Heart right ventricle (tissue), 16 donors: ENCODE measurements at regions of chr11 and their contacts with region 1.

Region 1: GRCh38 chr11:128824191-128825049 is 42.7 kb downstream of the KCNJ1 start:
- DNase-seq: no peak
- ATAC-seq: peak; percentile 38 to 86 (median 56)
- H3K4me3 ChIP-seq: peak overlapping the region in 8 of 10 donors; percentile 12 to 36 (median 26)
- H3K27ac ChIP-seq: peak overlapping the region in 6 of 10 donors; percentile 37 to 72 (median 54)
- H3K4me1 ChIP-seq: peaks cover 0 to 22% (median 6%) of the 10 kb centered on the region in 9 donors
- H3K27me3 ChIP-seq: peaks cover 0 to 11% (median 0%) of the 10 kb centered on the region in 7 donors
- CTCF ChIP-seq: no peak

Region 2: DNA sequence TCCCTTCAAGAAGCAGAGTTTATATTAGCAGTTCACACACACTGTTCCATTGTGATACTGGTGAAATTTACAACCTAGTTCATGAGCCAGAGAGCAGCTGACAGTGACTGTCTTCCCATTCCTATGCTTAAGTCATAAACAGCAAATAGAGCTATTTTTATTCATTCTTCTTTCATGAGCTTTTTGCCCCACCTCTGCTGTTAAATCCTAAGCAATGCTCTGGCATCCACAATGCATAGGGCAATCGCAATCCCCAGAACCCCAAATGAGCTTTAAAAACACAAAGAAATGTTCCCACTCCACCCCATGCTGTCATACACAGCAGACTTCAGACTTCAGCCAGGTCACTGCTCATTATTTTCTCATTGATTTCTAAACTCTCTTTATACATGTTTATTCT is 544.6 kb before region 1 on chr11:
- intact Hi-C with region 1: loop called in 1 of 10 experiments (anchors 10 kb)
- DNase-seq: no peak
- ATAC-seq: no peak
- H3K4me3 ChIP-seq: no peak overlapping the region
- H3K27ac ChIP-seq: no peak overlapping the region
- H3K4me1 ChIP-seq: no peaks in the 10 kb centered on the region
- H3K27me3 ChIP-seq: no peaks in the 10 kb centered on the region
- CTCF ChIP-seq: no peak

Region 3: DNA sequence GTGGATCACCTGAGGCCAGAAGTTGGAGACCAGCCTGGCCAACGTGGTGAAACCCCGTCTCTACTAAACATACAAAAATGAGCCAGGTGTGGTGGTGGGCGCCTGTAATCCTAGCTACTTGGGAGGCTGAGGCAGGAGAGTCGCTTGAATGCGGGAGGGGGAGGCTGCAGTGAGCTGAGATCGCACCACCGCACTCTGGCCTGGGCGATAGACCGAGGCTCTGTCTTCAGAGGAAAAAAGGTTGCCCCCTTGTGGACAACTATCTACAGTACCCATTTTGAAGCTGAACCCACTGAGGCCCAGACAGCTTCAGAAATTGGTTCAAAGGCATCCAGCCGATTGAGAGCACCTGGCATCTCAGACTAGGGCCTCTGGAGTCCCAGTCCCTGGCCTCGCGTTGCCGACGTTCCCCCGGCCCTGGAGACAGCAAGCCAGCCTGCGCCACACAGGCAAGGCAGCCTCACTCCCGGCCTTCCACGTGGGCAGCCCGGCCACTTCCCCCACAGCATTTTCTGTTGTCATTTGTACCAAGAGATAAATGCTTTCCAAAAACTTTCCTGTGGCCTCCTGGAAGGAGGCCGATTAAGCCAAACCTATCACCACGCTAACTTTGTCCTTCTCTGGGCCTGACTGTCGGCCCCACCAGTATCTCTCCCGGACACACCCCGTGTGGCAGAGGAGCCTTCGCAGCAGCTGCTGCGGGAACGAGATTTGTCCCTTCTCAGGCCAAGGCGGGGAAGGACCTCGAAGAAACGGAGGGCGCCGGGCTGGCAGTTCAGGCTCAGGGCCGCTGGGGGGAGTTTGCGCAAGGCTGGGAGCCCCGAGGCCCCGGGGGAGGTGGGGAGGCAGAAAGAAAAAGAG is 47.8 kb before region 1 on chr11:
- intact Hi-C with region 1: loop called in 2 of 10 experiments (anchors 5 kb)
- DNase-seq: peak; percentile 67 to 76
- ATAC-seq: peak; percentile 46 to 80 (median 65)
- H3K4me3 ChIP-seq: peak overlapping the region in 2 of 10 donors; percentile 8 to 11
- H3K27ac ChIP-seq: peak overlapping the region in 7 of 10 donors; percentile 18 to 67 (median 40)
- H3K4me1 ChIP-seq: peaks cover 5 to 72% (median 41%) of the 10 kb centered on the region in 9 donors
- H3K27me3 ChIP-seq: no peaks in the 10 kb centered on the region
- CTCF ChIP-seq: peak; percentile 27 to 67 (median 50)